ENCODE measurements at regions of chr9 and their contacts with region 1.

Region 1: GRCh38 chr9:133532937-133533668 is 1.4 kb upstream of the ADAMTSL2 start:
- H3K4me3 Mint-ChIP-seq: no peak overlapping the region
- H3K27ac Mint-ChIP-seq: no peak overlapping the region
- H3K4me1 Mint-ChIP-seq: peaks cover 5% of the 10 kb centered on the region
- H3K27me3 Mint-ChIP-seq: peaks cover 61% of the 10 kb centered on the region

Region 2: DNA sequence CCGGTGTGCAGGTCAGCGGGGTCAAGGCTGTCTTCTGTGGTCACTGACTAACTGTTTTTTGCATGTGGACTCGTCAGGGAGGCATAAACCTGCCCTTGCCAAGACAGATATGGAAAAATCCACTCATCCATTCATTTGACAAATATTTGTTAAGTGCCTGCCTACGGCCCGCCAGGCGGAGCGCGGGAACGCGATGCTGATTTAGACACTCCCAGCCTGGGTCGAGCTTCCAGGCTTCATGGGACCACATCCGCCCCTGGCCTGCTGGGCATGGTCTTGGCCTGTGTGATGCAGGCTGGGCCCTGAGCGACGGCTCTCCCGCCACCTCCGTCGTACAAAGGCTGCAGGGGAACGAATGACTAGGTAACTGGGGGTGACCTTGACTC is 26.5 kb before region 1 on chr9:
- intact Hi-C with region 1: no loop called
- H3K4me3 Mint-ChIP-seq: no peak overlapping the region
- H3K27ac Mint-ChIP-seq: no peak overlapping the region
- H3K4me1 Mint-ChIP-seq: peaks cover 4% of the 10 kb centered on the region
- H3K27me3 Mint-ChIP-seq: peaks cover 26% of the 10 kb centered on the region

Region 3: DNA sequence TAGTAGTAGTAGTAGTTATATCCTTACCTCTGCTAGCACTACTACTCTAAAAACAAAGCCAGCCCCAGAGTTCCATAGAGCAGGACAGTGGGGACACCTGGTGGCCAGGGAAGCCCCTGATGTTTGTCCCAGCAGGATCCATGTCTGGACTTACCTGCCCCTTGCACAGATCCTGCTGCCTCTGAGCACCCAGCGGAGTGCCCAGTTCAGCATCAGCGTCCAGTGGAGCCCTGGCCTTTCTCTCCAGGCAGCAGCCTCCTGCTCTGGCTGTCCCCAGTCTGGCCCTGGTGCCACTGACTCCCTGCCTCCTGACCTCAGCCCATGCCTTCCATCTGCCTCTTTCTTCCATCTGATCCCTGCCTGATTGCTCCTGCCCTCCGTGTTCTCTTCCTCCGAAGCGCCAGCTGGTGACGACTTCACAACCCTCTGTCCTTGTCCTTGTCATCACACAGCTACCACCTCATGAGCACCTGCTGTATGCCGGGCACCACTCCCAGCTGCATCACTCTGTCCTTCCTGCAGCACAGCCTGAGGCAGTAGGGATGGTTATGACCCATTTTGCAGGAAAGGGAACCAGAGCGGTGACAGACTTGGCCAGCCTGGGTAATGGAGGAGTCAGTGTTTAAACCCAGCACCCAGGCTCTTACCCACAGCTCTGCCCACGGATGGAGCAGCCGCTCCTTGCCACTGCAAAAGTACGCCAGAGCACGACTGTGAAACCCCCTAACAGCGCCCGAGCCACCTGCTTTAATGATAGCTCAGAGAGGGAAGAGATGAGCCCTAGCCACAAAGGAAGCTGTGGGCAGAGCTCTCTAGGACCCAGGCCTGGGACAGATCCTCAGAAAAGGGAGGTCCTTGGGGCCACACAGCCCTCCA is 193.5 kb after region 1 on chr9:
- intact Hi-C with region 1: loop called (anchors 2 kb)
- H3K4me3 Mint-ChIP-seq: no peak overlapping the region
- H3K27ac Mint-ChIP-seq: no peak overlapping the region
- H3K4me1 Mint-ChIP-seq: no peaks in the 10 kb centered on the region
- H3K27me3 Mint-ChIP-seq: peaks cover 2% of the 10 kb centered on the region